ENCODE measurements at regions of chr3 and their contacts with region 1.

Region 1: DNA sequence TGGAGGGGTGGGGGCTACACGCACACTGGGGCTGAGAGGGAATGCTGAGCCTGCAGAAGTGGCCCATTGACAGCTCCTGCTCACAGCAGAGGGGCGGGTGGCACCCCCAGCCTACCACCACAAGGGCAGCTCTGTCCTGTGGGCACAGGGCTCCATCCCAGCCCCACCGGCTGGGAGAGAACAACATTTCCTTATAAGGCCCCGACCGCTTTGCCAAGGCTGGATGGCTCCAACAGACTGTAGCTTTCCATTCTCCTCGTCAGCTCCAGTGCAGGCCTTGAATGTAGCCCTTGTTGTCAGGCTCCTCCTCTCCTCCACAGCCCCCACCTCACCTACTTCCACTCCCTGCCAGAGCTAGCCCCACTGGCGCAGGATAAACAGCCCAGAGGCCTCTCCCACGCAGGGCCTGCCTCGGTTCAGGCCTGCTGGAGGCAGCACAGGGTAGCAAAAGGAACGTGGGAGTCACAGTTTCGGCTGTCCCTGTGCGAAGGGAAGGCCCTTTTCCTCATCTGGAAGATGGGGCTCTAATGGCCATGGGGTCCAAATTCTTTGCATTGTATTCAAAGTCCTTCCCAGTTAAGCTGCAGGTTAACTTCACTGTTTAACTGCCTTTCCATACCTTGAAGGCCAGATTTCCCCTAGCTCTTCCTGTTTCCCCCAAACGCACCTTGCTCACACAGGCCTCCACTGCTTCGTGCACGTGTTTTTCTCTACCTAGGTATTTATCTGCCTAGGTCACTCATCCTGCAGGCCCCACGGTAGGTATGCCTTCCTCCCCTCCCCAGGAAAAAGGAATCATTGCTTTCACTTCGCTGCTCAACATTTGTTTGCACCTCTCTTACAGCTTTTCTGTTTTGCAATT is 101.6 kb upstream of the LPP start:
- DNase-seq: peak; percentile 87

Region 2: DNA sequence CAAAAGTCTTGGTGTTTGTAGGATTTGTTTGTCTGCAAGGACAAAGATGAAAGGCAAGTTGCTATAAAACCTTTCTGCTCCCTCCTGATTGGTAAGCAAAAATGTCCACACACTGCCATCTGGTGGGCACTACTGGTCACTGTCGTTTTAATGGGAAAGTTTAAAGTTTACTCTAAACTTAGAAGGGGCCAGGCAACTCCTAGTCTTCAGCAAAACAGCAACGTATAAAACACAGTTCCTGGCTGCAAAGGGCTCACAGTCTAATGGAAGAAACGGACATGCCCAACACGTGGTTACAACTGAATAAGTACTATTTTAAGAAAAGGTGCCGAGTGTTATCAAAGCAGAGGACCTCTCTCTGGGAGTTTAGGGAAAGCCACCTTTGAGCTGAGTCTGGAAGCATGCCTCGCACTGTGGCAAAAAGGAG is 1095.7 kb after region 1 on chr3:
- intact Hi-C with region 1: loop called (anchors 10 kb)
- DNase-seq: peak; percentile 77

Measured in cardiac septum (tissue), 1 donor.